Endothelial cell of umbilical vein (primary cell): ENCODE measurements at regions of chr4 and their contacts with region 1.

Region 1: DNA sequence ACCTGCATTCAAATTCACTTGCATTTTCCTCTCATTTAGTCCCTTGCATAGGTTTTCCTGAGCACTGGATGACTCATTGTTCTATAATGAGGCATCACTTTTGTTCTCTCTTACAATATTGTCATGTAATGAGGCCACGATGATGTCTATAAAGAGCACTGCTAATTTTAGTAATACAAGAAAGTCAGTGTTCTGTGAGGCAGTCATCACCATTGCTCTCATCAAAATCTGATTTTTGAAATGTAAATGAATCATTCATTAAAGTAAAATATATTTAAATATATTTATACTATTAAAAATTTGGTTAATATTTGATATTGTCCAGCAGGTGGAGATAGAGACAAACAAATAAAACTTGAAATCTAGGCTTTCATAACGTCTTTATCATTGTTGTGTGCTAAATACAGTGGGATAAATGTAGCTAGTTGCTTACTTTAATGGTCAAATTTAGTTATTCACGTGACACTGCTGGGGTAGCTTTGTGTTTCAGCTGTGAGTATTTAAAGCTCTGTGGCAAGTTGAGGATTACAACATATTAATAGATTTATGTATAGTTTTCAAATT is 15.4 kb downstream of the HMGB2 start:
- DNase-seq: peak; percentile 67
- H3K4me3 ChIP-seq: no peak overlapping the region
- H3K27ac ChIP-seq: peak overlapping the region; percentile 14
- H3K4me1 ChIP-seq: peaks cover 8% of the 10 kb centered on the region
- H3K27me3 ChIP-seq: no peaks in the 10 kb centered on the region
- CTCF ChIP-seq: peak in 1 of 2 donors; percentile 10
- POLR2A ChIP-seq: no peak

Region 2: DNA sequence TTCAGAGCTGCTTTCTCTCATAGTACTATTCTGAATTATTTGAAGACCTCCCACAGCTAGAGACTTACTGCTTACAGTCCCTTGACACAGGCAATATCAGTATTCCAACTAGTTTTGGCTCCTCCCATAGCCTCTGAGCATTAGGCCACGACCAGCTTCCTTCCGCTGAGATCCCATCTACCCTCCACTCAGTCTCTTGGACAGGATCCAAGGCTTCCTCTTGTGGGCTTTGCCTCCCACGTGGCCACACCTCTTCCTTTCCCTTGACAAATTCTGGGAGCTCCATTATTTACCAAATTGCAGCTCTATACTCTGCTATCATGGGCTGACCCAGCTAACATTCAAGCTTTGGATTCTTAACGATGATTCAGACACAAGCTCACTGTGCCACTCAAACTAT is 620.5 kb before region 1 on chr4:
- CTCF ChIA-PET with region 1: no interaction called
- POLR2A ChIA-PET with region 1: no interaction called
- dilution Hi-C with region 1: no loop called
- intact Hi-C with region 1: no loop called
- DNase-seq: no peak
- H3K4me3 ChIP-seq: no peak overlapping the region
- H3K27ac ChIP-seq: no peak overlapping the region
- H3K4me1 ChIP-seq: no peaks in the 10 kb centered on the region
- H3K27me3 ChIP-seq: no peaks in the 10 kb centered on the region
- CTCF ChIP-seq: no peak
- POLR2A ChIP-seq: no peak

Region 3: DNA sequence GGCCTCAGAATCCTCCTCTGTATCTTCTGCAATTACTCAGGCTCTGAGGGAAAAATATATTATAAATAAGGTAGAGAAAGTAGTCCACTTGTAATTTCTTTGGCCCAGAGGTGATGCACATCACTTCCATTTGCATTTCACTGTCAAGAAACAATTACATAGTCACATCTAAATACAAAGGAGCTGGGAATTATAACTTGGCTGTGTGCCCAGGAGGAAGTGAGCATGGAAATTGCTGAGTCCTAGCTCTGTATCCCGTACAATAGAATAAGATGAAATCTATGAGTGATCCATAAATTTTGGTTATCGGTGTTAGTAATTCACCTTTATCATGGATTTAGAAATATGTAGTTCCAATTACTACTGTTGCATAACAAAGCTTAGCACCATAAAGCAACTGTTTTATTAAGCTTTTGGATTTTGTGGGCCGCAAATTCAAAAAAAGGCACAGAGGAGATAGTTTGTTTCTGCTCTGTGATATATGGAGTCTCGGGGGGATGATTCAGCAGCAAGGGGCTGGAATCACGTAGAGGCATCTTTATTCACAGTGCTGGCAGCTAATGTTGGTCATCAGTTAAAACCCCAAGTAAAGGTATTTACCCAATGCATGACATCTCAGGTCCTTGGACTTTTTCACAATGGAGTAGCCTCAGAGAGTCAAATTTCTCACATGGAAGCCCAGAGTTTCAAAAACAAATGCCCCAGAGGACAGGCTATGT is 391.5 kb before region 1 on chr4:
- CTCF ChIA-PET with region 1: no interaction called
- POLR2A ChIA-PET with region 1: no interaction called
- dilution Hi-C with region 1: no loop called
- intact Hi-C with region 1: no loop called
- DNase-seq: peak; percentile 37
- H3K4me3 ChIP-seq: no peak overlapping the region
- H3K27ac ChIP-seq: no peak overlapping the region
- H3K4me1 ChIP-seq: no peaks in the 10 kb centered on the region
- H3K27me3 ChIP-seq: peaks cover 0 to 2% of the 10 kb centered on the region in 2 experiments
- CTCF ChIP-seq: no peak
- POLR2A ChIP-seq: no peak

Region 4: GRCh38 chr4:173307778-173308177 is 11.0 kb before region 1 on chr4:
- CTCF ChIA-PET with region 1: interaction called, 21 read pairs
- POLR2A ChIA-PET with region 1: no interaction called
- dilution Hi-C with region 1: no loop called
- intact Hi-C with region 1: no loop called
- DNase-seq: no peak
- H3K4me3 ChIP-seq: no peak overlapping the region
- H3K27ac ChIP-seq: no peak overlapping the region
- H3K4me1 ChIP-seq: no peaks in the 10 kb centered on the region
- H3K27me3 ChIP-seq: no peaks in the 10 kb centered on the region
- CTCF ChIP-seq: no peak
- POLR2A ChIP-seq: no peak

Region 5: DNA sequence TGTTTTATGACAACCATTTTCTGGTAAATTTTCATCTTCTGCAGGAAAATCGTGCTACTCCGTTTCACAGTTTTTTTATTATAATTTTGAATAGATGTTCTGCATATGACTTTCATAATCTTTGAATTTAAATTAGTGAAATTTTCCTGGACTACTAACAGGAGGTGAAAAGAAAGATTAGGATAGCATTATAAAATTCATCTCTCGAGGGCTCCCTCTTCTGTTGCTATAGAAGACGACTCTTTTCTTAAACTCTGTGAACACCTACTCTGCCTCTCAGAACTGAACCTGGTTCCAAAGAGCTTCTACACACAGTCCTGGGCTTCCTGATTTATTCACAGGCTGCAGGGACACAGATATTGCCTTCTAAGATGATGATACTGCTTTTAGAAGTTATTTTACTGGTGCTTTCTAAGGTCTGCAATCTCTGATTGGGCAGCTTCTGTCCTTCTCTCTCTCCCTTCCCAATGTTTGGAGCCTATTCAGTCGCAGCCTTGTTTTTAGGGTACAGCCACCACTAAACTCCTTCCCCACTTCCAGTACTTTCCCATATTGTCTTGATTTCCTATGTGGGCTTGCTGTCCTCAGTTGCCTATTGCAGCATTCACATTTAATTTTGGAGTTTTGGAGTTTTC is 42.0 kb after region 1 on chr4:
- CTCF ChIA-PET with region 1: interaction called, 15 read pairs
- POLR2A ChIA-PET with region 1: no interaction called
- dilution Hi-C with region 1: no loop called
- intact Hi-C with region 1: no loop called
- DNase-seq: peak; percentile 12
- H3K4me3 ChIP-seq: no peak overlapping the region
- H3K27ac ChIP-seq: no peak overlapping the region
- H3K4me1 ChIP-seq: no peaks in the 10 kb centered on the region
- H3K27me3 ChIP-seq: peaks cover 2 to 7% of the 10 kb centered on the region in 2 experiments
- CTCF ChIP-seq: peak in 1 of 2 donors; percentile 30
- POLR2A ChIP-seq: no peak

Region 6: DNA sequence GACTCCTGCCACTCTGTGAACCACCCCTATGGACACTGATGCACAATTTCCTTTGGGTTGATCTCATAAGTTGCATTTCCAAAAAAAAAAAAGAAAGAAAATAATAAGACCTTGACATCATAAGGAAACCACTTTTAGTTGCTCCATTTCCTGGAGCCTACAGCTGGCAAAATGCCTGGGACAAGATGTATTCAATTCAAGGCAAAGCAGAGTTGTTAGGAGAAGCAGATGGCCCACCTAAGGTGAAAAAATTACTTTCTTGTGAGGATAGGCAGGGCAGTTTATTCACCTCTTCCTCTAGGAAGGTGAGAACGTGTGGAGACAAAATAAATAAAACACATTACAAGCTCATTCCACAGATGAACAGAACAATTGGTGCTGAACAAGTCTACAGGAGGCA is 94.3 kb after region 1 on chr4:
- CTCF ChIA-PET with region 1: interaction called, 214 read pairs
- POLR2A ChIA-PET with region 1: no interaction called
- dilution Hi-C with region 1: no loop called
- intact Hi-C with region 1: loop called (anchors 1 kb)
- DNase-seq: peak; percentile 68
- H3K4me3 ChIP-seq: no peak overlapping the region
- H3K27ac ChIP-seq: no peak overlapping the region
- H3K4me1 ChIP-seq: peaks cover 24% of the 10 kb centered on the region
- H3K27me3 ChIP-seq: no peaks in the 10 kb centered on the region
- CTCF ChIP-seq: no peak
- POLR2A ChIP-seq: no peak

Region 7: DNA sequence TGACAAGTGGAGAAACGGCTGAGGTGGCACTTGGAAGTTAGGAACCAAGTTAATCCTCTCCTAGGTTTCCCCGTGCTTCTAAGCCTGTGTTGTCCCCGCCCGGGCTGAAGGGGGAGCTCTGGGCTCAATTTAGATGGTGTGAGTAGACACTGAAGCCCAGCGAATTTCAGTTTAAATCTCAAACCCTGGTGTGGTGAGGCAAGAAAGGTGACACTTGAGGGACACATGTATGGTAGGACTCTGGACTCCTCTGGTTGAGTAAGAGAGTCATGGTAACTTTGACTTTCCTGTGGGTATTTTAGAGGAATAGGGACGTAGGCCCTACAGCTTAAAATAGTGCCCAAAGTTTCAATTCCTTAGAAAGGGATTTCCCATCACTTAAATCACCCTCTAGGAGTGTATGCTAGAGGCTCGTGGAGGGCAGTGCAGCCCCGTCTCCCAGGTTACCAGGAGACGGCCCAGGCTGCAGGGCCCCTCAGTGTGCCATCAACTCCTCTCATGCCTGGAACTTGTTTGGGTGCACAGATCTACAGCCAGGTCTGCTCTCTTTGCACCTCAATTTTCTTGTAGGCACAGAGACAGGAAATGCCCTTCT is 187.3 kb after region 1 on chr4:
- CTCF ChIA-PET with region 1: interaction called, 10 read pairs
- POLR2A ChIA-PET with region 1: no interaction called
- dilution Hi-C with region 1: no loop called
- intact Hi-C with region 1: no loop called
- DNase-seq: peak; percentile 25
- H3K4me3 ChIP-seq: no peak overlapping the region
- H3K27ac ChIP-seq: no peak overlapping the region
- H3K4me1 ChIP-seq: peaks cover 17% of the 10 kb centered on the region
- H3K27me3 ChIP-seq: peaks cover 83 to 96% of the 10 kb centered on the region in 2 experiments
- CTCF ChIP-seq: peak; percentile 57 to 71
- POLR2A ChIP-seq: no peak

Region 8: GRCh38 chr4:174156239-174156826 is 837.6 kb after region 1 on chr4:
- CTCF ChIA-PET with region 1: no interaction called
- POLR2A ChIA-PET with region 1: no interaction called
- dilution Hi-C with region 1: no loop called
- intact Hi-C with region 1: loop called (anchors 2 kb)
- DNase-seq: peak; percentile 62
- H3K4me3 ChIP-seq: no peak overlapping the region
- H3K27ac ChIP-seq: no peak overlapping the region
- H3K4me1 ChIP-seq: no peaks in the 10 kb centered on the region
- H3K27me3 ChIP-seq: peaks cover 2 to 8% of the 10 kb centered on the region in 2 experiments
- CTCF ChIP-seq: peak; percentile 14 to 55
- POLR2A ChIP-seq: no peak